Prostate gland (tissue), 2 donors: ENCODE measurements at regions of chr4 and their contacts with region 1.

Region 1: DNA sequence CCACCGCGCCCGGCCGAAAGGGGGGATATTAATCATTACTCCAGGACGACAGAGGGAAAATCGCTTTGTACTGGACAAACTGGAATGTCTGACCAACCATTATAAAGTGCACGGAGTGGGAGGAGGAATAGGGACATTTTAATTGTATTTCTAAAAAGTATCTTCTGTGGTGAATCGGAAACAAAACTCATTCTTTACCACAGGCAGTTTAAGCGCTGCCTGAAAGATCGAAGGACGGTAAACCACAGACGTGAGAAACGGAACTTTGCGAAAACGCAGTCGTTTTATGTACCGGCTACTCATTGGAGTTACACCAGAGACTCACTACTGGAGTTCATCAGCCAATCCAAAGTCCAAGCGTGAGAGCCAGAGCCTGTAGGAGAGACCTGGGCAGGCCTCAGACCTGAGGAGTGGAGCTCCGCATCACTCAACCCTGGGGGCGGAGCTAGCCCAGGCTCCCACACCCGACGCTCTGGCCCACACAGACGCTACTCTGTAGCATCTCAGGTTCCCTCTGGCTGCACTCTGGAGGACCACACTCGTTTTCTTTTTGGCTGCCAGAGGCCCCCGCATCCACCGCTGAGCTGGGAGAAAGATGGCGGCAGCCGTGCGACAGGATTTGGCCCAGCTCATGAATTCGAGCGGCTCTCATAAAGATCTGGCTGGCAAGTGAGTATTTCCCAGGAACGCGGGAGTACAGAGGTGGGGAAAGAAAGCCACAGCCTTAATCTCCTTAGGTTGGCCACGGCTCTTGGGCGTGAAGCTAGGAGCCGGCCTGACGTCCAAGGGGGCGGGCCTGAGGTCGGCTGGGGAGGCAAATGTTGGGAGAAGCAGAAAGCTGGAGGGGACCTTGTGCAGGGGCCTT is at the start of gene COPS4:
- DNase-seq: peak; percentile 99
- H3K4me3 ChIP-seq: peak within 1 kb of the TSS; percentile 56 to 58
- H3K27ac ChIP-seq: peak within 1 kb of the TSS; percentile 85 to 87
- H3K4me1 ChIP-seq: no peaks in the 10 kb centered on the region
- H3K27me3 ChIP-seq: no peaks in the 10 kb centered on the region
- CTCF ChIP-seq: peak in 3 of 4 experiments; percentile 38 to 75 (median 69)
- POLR2A ChIP-seq: peak; percentile 82
- total RNA-seq, gene COPS4: 50.5 to 56.9 TPM

Region 2: DNA sequence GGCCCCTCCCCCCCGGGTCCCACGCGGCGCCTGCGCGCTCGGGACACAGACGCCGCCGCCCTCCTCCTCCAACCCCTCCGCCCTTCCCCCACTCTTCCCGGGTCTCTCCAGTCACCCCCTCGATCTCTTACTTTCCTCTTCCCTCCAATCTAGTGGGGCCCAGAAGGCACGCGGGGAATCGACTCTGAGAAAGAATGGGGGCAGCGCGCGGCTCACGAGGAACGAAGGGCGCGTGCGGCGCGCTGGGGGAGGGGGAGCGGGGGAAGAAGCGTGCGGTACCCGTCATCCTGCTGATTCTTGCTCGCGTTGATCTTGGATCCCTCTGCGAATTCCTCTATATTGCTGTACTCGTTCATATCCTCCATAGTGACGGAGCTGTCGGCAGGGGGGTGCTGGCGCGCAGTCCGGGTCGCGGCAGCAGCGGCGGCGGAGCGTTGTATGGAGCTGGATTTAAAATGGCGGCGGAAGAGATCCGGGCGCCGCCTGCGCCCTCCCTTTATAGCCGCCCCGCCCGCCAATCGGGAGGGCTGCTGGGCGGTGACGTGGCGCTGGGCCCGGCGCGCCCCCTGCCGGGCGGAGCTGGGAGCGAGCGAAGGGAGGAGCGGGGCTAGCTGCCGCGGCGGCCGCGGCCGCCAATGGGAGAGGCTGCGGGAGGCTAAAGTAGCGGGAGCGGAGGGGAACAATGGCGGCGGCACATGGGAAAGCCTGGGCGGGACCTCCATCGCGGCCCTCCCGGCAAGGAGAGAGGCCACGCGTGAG is 605.7 kb before region 1 on chr4:
- intact Hi-C with region 1: loop called (anchors 10 kb)
- DNase-seq: peak; percentile 90
- H3K4me3 ChIP-seq: peak overlapping the region; percentile 90 to 96
- H3K27ac ChIP-seq: peak overlapping the region; percentile 98
- H3K4me1 ChIP-seq: peaks cover 3% of the 10 kb centered on the region
- H3K27me3 ChIP-seq: no peaks in the 10 kb centered on the region
- CTCF ChIP-seq: peak; percentile 95 to 100 (median 99)
- POLR2A ChIP-seq: peak; percentile 79

Region 3: GRCh38 chr4:83012687-83013419 is 22.0 kb before region 1 on chr4:
- intact Hi-C with region 1: loop called (anchors 2 kb)
- DNase-seq: peak; percentile 95
- H3K4me3 ChIP-seq: peak overlapping the region; percentile 61 to 82
- H3K27ac ChIP-seq: peak overlapping the region; percentile 88 to 90
- H3K4me1 ChIP-seq: no peaks in the 10 kb centered on the region
- H3K27me3 ChIP-seq: no peaks in the 10 kb centered on the region
- CTCF ChIP-seq: peak; percentile 35 to 93 (median 70)
- POLR2A ChIP-seq: peak; percentile 72